ENCODE measurements at regions of chr22 and their contacts with region 1.

Region 1: GRCh38 chr22:19909350-19910179 is 32.0 kb upstream of the COMT start:
- DNase-seq: peak; percentile 88
- CTCF ChIP-seq: peak; percentile 97

Region 2: GRCh38 chr22:19756288-19757128 is 153.1 kb before region 1 on chr22:
- CTCF ChIA-PET with region 1: interaction called, 25 read pairs
- POLR2A ChIA-PET with region 1: no interaction called
- DNase-seq: peak; percentile 80
- CTCF ChIP-seq: peak; percentile 64

Region 3: DNA sequence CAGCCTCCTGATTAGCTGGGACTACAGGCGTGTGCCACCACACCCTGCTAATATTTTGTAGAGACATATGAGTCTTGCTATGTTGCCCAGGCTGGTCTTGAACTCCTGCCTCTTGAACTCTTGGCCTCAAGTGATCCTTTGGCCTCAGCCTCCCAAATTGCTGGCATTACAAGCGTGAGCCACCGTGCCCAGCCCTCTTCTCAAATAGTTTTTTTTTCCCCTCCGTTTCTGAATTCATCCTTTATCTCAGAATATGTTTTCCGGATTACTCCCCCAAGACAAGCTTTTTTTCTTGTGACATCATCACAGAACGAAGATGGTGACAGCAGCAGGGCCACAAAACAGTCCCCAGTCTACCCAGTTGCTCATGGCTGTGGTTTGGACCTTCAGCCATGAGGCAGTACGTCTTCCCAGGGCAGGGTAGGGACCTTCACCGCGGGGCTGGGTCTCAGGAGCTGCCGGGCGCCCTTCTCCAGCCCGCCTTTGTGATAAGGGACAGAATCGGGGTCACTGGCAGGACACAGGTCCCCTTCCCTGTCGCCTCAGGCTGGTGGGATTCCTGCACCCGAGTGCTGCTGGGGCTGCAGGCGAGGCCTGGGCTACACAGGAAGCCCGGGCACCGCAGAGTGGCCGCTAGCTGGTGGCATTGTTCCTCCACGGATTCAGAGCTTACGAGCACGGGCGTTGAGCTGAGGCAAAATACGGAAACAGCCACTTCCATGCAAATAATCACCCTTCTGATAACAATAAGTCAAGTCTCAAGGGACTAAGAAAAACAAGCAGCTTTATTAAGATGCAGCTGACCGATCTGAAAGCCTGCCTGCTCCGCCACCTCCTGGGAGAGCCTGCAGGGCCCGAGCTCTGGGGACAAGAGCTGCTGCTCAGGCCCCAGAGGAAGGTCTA is 136.9 kb before region 1 on chr22:
- CTCF ChIA-PET with region 1: interaction called, 10 read pairs
- POLR2A ChIA-PET with region 1: no interaction called
- DNase-seq: no peak
- CTCF ChIP-seq: no peak

Region 4: GRCh38 chr22:19877626-19878339 is 31.8 kb before region 1 on chr22:
- CTCF ChIA-PET with region 1: no interaction called
- POLR2A ChIA-PET with region 1: no interaction called
- DNase-seq: no peak
- CTCF ChIP-seq: no peak

Region 5: DNA sequence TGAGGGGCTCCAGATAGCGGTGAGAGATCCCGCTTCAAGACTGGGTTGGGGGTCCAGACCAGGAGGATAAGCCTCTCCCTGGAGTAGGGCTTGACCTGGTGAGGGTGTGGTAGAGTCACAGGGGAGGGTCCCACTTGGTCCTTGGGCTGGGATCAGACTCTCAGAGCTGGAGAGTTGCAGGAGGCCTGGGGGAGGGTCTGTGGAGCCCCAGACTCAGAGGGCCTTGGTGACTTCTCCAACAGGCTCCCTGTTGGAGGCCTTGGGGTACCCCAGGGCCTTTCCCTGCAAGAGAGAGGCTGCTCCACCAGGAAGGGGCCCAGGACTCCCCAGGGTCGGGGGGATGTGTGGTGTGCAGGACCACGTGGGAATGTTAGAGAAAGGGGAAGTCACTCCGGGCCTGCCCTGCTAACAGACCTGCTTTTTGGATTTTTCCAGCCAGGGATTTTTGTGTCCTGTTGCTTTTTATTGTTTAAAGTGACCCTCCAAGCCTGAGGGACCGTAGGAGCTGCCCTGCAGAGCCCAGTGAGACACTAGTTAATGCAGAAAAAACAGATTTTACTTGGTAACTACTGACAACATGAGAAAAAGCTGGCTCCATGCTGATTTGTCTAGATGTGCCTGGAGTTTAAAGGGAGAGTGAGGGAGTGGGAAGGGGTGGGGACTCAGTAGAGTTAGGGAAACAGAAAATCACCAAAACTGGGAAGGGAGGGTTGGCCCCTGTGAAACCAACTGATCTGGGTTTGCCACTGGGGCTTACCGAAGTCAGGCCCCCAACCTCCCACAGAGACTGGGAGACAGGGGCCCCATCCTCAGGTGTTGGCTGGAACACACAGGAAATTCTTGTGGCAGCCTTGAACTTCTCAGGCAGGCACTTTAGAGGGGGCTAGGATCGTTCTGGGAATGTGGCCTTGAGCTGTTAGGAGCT is 32.9 kb after region 1 on chr22:
- CTCF ChIA-PET with region 1: interaction called, 10 read pairs
- POLR2A ChIA-PET with region 1: no interaction called
- DNase-seq: peak; percentile 51
- CTCF ChIP-seq: no peak

Region 6: DNA sequence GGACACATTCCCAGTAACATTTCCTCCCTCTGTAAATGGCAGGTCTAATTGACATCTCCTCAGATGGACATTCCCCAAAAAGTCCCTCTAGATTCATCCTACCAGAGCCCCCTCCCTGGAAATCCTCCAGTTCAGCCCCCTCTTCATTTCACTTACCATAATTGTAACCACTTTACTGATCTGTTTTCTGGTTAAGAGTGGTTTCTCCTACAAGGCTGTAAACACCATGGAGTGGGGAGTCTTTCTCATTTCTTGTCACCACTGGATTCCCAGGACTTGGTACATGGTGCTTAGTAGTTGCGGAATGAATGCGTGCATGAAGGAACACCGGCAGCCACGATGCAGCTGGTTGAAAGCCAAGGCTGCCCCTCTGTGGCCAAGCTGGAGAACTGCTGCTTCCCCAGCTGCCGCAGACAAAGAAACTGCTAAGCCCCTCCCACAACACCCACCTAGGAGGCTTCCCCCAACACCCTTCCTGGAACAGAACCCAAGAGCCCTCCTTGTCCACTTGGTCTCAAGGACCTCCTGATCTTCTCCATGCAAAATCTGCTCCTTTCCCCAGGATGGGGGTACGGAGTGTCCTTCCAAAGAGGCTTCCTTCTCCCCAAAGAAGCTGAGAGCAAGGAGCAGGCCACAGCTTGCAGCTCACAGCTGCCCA is 546.6 kb after region 1 on chr22:
- CTCF ChIA-PET with region 1: no interaction called
- POLR2A ChIA-PET with region 1: no interaction called
- DNase-seq: peak; percentile 88
- CTCF ChIP-seq: peak; percentile 86

Measured in GM10248 (cell line).